Adrenal gland (tissue), 19 donors: ENCODE measurements at regions of chrX and their contacts with region 1.

Region 1: DNA sequence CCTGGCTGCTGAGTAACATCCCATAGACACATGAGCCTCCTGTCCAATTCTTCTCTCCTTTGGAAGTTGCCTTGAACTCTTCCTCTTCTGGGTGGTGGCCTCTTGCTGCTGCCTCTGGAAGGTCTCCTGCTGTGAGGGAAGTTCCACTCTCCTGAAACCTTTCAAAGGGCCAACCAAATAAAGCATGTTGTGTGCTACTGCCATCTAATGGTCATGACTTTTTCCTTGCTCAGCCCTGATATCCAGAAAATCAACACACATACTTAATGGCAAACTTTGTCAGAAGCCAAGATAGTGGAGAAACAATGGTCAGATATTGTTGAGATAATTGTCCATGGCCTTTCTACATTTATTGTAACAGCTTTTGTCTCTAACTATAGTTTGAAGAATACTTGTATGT is 19.1 kb upstream of the ZXDA start:
- DNase-seq: no peak
- H3K4me3 ChIP-seq: no peak overlapping the region
- H3K27ac ChIP-seq: no peak overlapping the region
- H3K4me1 ChIP-seq: no peaks in the 10 kb centered on the region
- H3K27me3 ChIP-seq: no peaks in the 10 kb centered on the region
- CTCF ChIP-seq: peak; percentile 27 to 54 (median 50)
- POLR2A ChIP-seq: no peak

Region 2: DNA sequence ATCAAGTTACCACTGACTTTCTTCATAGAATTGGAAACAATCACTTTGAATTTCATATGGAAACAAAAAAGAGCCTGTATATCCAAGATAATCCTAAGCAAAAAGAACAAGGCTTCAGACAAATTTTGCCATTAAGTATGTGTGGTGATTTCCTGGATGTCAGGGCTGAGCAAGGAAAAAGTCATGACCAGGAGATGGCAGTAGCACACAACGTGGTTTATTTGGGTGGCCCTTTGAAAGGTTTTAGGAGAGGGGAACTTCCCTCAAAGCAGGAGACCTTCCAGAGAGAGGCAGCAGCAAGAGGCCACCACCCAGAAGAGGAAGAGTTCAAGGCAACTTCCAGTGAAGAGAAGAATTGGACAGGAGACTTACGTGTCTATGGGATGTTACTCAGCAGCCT is 355.6 kb before region 1 on chrX:
- intact Hi-C with region 1: loop called in 1 of 2 experiments (anchors 10 kb)
- DNase-seq: peak in 1 of 7 donors; percentile 5
- H3K4me3 ChIP-seq: no peak overlapping the region
- H3K27ac ChIP-seq: no peak overlapping the region
- H3K4me1 ChIP-seq: no peaks in the 10 kb centered on the region
- H3K27me3 ChIP-seq: no peaks in the 10 kb centered on the region
- CTCF ChIP-seq: peak in 4 of 6 experiments; percentile 23 to 32 (median 28)
- POLR2A ChIP-seq: no peak

Region 3: GRCh38 chrX:57848857-57849256 is 80.5 kb before region 1 on chrX:
- intact Hi-C with region 1: no loop called
- DNase-seq: no peak
- H3K4me3 ChIP-seq: no peak overlapping the region
- H3K27ac ChIP-seq: no peak overlapping the region
- H3K4me1 ChIP-seq: no peaks in the 10 kb centered on the region
- H3K27me3 ChIP-seq: no peaks in the 10 kb centered on the region
- CTCF ChIP-seq: no peak
- POLR2A ChIP-seq: no peak

Region 4: GRCh38 chrX:58044144-58044543 is 114.8 kb after region 1 on chrX:
- intact Hi-C with region 1: no loop called
- DNase-seq: no peak
- H3K4me3 ChIP-seq: no peak overlapping the region
- H3K27ac ChIP-seq: no peak overlapping the region
- H3K4me1 ChIP-seq: no peaks in the 10 kb centered on the region
- H3K27me3 ChIP-seq: peaks cover 2% of the 10 kb centered on the region
- CTCF ChIP-seq: no peak
- POLR2A ChIP-seq: no peak